Mammary epithelial cell (primary cell): ENCODE measurements at regions of chr16 and their contacts with region 1.

Region 1: DNA sequence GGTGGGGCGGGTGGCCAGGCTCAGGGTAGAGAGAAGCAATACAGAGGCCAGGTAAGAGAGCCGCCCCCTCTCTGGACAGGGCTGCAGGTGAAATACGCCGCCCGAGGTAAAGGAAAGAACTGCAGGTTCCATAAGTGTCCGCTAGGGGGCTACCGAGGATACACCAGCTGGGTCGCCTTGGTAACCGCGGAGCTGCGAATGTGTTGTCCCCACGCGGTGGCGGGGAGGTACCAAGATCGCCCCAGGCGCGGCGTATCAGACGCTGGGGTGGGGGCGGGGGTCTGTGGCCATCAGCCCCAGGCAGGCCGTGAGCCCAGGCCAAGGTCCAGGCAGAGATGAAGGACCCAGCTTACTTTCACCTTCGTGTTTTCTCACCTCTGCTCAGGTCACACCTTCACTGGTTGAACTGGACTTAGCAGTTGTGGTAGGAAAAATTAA is 18.4 kb upstream of the ZFP90 start:
- DNase-seq: peak; percentile 69
- H3K4me3 ChIP-seq: peak overlapping the region; percentile 8 to 25 (median 23)
- H3K27ac ChIP-seq: no peak overlapping the region
- H3K4me1 ChIP-seq: peaks cover 4% of the 10 kb centered on the region
- H3K27me3 ChIP-seq: no peaks in the 10 kb centered on the region
- CTCF ChIP-seq: peak; percentile 98 to 99

Region 2: DNA sequence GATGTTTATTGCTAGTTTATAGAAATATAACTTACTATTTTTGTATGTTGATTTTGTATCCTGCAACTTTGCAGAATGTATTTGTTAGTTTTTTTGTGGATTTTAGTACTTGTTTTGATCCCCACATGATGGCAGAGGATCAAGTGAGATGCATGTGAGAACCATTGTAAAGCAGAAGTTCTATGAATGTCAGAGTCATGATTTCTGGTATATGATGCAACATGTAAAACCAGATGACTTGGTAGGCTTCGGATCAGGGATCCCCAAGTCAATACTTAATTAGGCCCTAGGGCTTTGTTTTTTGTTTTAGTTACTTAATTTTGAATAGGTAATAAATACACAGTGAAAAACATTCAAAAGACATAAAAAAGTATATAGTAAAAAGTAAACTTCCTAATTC is 330.6 kb before region 1 on chr16:
- CTCF ChIA-PET with region 1: no interaction called
- dilution Hi-C with region 1: no loop called
- in situ Hi-C with region 1: no loop called
- intact Hi-C with region 1: no loop called
- DNase-seq: no peak
- H3K4me3 ChIP-seq: no peak overlapping the region
- H3K27ac ChIP-seq: no peak overlapping the region
- H3K4me1 ChIP-seq: no peaks in the 10 kb centered on the region
- H3K27me3 ChIP-seq: no peaks in the 10 kb centered on the region
- CTCF ChIP-seq: no peak

Region 3: GRCh38 chr16:68367030-68367429 is 153.6 kb before region 1 on chr16:
- CTCF ChIA-PET with region 1: no interaction called
- dilution Hi-C with region 1: no loop called
- in situ Hi-C with region 1: no loop called
- intact Hi-C with region 1: loop called (anchors 10 kb)
- DNase-seq: no peak
- H3K4me3 ChIP-seq: no peak overlapping the region
- H3K27ac ChIP-seq: no peak overlapping the region
- H3K4me1 ChIP-seq: no peaks in the 10 kb centered on the region
- H3K27me3 ChIP-seq: no peaks in the 10 kb centered on the region
- CTCF ChIP-seq: peak; percentile 34 to 45

Region 4: DNA sequence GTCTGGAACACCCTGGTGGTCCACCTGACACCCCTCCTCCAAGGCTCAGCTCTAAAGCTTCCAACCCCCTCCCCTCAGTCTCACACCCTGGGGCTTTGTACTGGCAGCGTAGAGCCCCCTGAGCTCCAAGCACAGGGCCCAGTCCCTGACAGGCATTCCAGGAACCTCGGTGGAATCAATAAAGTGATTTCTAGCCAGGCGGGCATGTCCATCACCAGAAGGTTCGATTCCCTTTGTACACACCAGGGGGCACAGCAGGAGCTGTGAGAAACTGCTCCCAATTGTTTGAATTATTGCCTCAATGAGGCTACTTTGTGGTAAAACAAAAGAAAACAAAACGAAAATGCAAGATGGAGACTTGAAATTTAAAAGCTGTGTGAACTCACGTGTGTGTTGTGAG is 124.2 kb before region 1 on chr16:
- CTCF ChIA-PET with region 1: no interaction called
- dilution Hi-C with region 1: no loop called
- in situ Hi-C with region 1: loop called in 1 of 2 experiments (anchors 25 kb)
- intact Hi-C with region 1: no loop called
- DNase-seq: peak; percentile 26
- H3K4me3 ChIP-seq: no peak overlapping the region
- H3K27ac ChIP-seq: no peak overlapping the region
- H3K4me1 ChIP-seq: no peaks in the 10 kb centered on the region
- H3K27me3 ChIP-seq: no peaks in the 10 kb centered on the region
- CTCF ChIP-seq: peak; percentile 59 to 71

Region 5: GRCh38 chr16:68448360-68448970 is 72.2 kb before region 1 on chr16 and contains the start of gene SMPD3:
- CTCF ChIA-PET with region 1: no interaction called
- dilution Hi-C with region 1: loop called (anchors 5 kb)
- in situ Hi-C with region 1: loop called in 1 of 2 experiments (anchors 5 kb)
- intact Hi-C with region 1: no loop called
- DNase-seq: peak; percentile 98
- H3K4me3 ChIP-seq: peak within 1 kb of the TSS; percentile 36 to 51 (median 43)
- H3K27ac ChIP-seq: no peak within 1 kb of the TSS
- H3K4me1 ChIP-seq: peaks cover 7% of the 10 kb centered on the region
- H3K27me3 ChIP-seq: peaks cover 11% of the 10 kb centered on the region
- CTCF ChIP-seq: no peak
- total RNA-seq, gene SMPD3: not detected

Region 6: GRCh38 chr16:68627951-68628425 is 107.3 kb after region 1 on chr16:
- CTCF ChIA-PET with region 1: no interaction called
- dilution Hi-C with region 1: loop called (anchors 5 kb)
- in situ Hi-C with region 1: no loop called
- intact Hi-C with region 1: no loop called
- DNase-seq: peak; percentile 39
- H3K4me3 ChIP-seq: no peak overlapping the region
- H3K27ac ChIP-seq: no peak overlapping the region
- H3K4me1 ChIP-seq: peaks cover 5% of the 10 kb centered on the region
- H3K27me3 ChIP-seq: no peaks in the 10 kb centered on the region
- CTCF ChIP-seq: no peak

Region 7: DNA sequence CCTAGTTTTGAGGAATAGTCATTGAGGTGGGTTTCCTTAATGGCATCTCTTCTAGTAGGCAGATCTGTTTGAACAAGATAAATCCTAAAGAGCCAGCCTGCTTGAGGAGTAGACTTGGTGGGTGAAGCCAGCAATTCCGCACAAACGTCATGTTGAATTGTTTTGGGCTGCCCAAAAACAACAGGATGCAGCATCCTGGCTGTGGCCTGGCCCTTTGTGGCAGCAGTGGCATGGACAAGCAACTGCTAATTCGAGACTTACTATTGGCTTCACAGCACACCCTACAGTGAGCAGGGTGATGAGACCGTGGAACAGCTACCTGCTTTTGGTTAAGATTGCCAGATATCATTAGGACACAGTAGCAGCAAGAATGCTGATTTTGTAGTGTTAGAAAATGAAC is 781.2 kb after region 1 on chr16:
- CTCF ChIA-PET with region 1: interaction called, 10 read pairs
- dilution Hi-C with region 1: no loop called
- in situ Hi-C with region 1: no loop called
- intact Hi-C with region 1: no loop called
- DNase-seq: no peak
- H3K4me3 ChIP-seq: no peak overlapping the region
- H3K27ac ChIP-seq: no peak overlapping the region
- H3K4me1 ChIP-seq: no peaks in the 10 kb centered on the region
- H3K27me3 ChIP-seq: no peaks in the 10 kb centered on the region
- CTCF ChIP-seq: no peak